Mammary epithelial cell (primary cell): ENCODE measurements at regions of chr5 and their contacts with region 1.

Region 1: DNA sequence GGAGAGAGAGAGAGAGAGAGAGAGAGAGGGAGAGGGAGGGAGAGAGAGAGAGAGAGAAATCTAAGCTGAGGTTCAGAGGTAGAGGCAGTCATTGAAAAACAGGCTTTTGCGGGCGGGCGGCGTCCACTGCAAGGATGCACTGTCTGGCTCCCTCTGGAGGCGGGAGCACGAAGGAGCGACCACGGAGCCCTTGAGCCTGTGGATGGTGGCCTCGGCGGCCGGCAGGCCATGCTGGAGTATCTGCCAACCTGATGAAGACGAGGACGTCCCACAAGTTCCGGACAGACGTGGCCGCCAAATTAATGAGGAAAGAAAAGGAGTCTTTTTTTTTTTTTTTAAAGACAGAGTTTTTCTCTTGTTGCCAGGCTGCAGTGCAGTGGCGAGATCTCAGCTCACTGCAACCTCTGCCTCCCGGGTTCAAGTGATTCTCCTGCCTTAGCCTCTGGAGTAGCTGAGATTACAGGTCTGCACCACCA is 2.2 kb upstream of the CCDC125 start:
- DNase-seq: peak; percentile 62
- H3K4me3 ChIP-seq: no peak overlapping the region
- H3K27ac ChIP-seq: no peak overlapping the region
- H3K4me1 ChIP-seq: peaks cover 15% of the 10 kb centered on the region
- H3K27me3 ChIP-seq: no peaks in the 10 kb centered on the region
- CTCF ChIP-seq: peak; percentile 68 to 85

Region 2: GRCh38 chr5:69166686-69167492 is 167.9 kb before region 1 on chr5 and contains the start of gene CCNB1:
- CTCF ChIA-PET with region 1: interaction called, 14 read pairs
- dilution Hi-C with region 1: no loop called
- in situ Hi-C with region 1: no loop called
- intact Hi-C with region 1: no loop called
- DNase-seq: peak; percentile 98
- H3K4me3 ChIP-seq: peak within 1 kb of the TSS; percentile 74 to 87 (median 76)
- H3K27ac ChIP-seq: peak within 1 kb of the TSS; percentile 81
- H3K4me1 ChIP-seq: peaks cover 19% of the 10 kb centered on the region
- H3K27me3 ChIP-seq: no peaks in the 10 kb centered on the region
- CTCF ChIP-seq: no peak
- total RNA-seq, gene CCNB1: 22.5 to 151 TPM